Activated CD8-positive, alpha-beta memory T cell treated with anti-CD3 and anti-CD28 coated beads, Interleukin-2, amount 10 ng/mL, durations not matched to agents 7 days and 5 days (primary cell): ENCODE measurements at regions of chr5 and their contacts with region 1.

Region 1: GRCh38 chr5:126676195-126676624 is 75.5 kb downstream of the PHAX start:
- DNase-seq: peak; percentile 81
- ATAC-seq: peak; percentile 88
- H3K4me3 Mint-ChIP-seq: no peak overlapping the region
- H3K27ac Mint-ChIP-seq: peak overlapping the region; percentile 50
- H3K4me1 Mint-ChIP-seq: peaks cover 24% of the 10 kb centered on the region
- H3K27me3 Mint-ChIP-seq: no peaks in the 10 kb centered on the region

Region 2: GRCh38 chr5:126686451-126687126 is 10.4 kb after region 1 on chr5:
- CTCF ChIA-PET with region 1: interaction called, 10 read pairs
- DNase-seq: peak; percentile 36
- ATAC-seq: no peak
- H3K4me3 Mint-ChIP-seq: no peak overlapping the region
- H3K27ac Mint-ChIP-seq: no peak overlapping the region
- H3K4me1 Mint-ChIP-seq: peaks cover 11% of the 10 kb centered on the region
- H3K27me3 Mint-ChIP-seq: peaks cover 8% of the 10 kb centered on the region

Region 3: DNA sequence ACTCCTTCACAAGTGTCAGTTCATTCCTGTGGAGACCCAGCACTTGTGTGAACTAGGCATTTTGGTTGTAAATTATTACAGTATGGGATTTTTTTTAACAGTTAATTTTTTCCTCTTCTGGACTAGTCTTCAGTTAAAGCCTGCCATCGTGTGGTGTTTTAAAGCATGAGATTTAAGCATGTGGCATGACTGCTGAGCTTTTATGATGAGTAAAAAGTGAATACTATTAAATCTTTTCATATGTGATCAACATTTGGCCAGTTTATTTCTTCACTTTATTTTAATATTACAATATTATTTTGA is 125.7 kb after region 1 on chr5:
- CTCF ChIA-PET with region 1: interaction called, 27 read pairs
- DNase-seq: no peak
- ATAC-seq: no peak
- H3K4me3 Mint-ChIP-seq: no peak overlapping the region
- H3K27ac Mint-ChIP-seq: no peak overlapping the region
- H3K4me1 Mint-ChIP-seq: peaks cover 55% of the 10 kb centered on the region
- H3K27me3 Mint-ChIP-seq: no peaks in the 10 kb centered on the region

Region 4: DNA sequence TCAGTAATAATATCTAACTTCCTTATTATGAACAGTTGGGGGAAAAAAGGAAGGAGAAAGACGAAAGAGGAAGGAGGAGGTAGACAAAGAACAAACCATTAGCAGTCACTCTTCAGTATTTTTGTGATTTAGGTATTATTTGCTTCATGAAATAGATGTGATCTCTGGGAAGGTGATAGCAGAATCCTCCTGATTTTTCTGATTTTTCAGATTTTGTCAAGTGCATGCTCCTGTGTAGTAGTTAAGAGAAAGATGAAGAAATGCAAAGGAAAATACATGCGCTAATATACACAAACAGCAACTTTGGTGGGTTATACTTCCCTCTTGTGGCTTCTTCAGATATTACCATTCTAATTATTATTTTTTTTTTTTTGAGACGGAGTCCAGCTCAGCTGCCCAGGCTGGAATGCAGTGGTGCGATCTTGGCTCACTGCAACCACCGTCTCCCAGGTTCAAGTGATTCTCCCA is 132.3 kb after region 1 on chr5:
- CTCF ChIA-PET with region 1: interaction called, 27 read pairs
- DNase-seq: no peak
- ATAC-seq: no peak
- H3K4me3 Mint-ChIP-seq: no peak overlapping the region
- H3K27ac Mint-ChIP-seq: no peak overlapping the region
- H3K4me1 Mint-ChIP-seq: peaks cover 52% of the 10 kb centered on the region
- H3K27me3 Mint-ChIP-seq: no peaks in the 10 kb centered on the region